ENCODE measurements at regions of chr13 and their contacts with region 1.

Region 1: DNA sequence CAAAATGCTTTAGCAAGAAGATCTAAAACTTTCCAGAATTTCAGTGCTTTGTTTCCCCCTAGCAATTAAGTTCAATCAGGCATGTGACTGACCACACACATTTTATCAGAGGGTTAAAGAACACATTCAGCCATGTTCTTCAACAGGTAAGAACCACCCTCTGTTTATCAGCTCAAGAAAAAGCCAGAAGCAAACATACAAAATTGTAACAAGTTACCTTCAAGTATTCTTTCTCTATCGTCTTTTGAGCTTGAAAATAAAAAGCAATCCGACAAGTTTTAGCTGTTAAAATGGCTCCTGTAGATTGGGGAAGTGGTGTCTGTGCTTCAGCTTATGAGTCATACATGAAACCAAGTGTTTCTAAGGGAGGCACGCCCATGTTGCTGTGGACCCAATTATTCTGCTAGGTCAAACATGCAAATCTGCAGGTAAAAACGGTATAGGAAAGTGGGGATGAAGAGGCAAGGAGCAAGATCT is at the start of gene ELF1:
- DNase-seq: peak; percentile 80
- H3K4me3 Mint-ChIP-seq: peak within 1 kb of the TSS; percentile 98
- H3K27ac Mint-ChIP-seq: peak within 1 kb of the TSS; percentile 97
- H3K4me1 Mint-ChIP-seq: peaks cover 45% of the 10 kb centered on the region
- H3K27me3 Mint-ChIP-seq: no peaks in the 10 kb centered on the region
- total RNA-seq, gene ELF1: 125 to 149 TPM

Region 2: DNA sequence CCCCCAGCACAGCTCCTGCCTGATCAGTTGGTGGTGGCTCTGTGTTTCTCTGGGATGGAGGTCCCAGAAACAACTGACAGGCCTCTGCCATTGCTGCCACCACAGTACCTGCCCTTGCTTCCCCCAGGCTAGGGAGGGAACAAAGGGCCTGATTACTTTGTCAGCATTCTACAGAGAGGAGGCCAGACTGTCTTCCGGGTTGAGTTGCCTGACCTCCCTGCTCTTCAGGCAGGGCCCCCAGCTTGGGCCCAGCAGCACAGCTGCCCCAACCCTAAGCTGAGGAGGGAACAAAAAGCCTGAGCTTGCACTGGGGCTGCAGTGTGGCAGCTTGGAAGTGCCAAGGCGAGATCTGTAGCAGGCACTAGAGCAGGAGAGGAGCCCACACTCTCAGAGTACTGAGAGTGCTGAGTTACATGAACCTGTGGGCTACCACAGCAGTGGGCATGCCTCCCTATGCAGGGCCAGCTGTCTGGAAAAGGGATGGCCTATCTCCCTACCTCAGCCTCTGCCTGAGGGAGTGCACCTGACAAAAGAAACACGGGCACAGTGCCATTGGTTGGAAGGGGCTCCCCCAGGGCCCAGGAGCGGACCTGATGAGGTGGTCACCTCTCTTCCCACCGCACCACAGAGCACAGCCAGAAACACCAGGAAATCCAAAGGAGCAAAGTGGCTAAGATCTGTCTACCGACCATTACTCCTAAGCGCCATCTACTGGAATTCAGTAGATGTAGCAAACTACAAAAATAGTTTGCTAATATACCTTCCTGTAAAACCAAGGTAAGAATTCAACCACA is 205.2 kb before region 1 on chr13:
- CTCF ChIA-PET with region 1: no interaction called
- POLR2A ChIA-PET with region 1: no interaction called
- DNase-seq: no peak
- H3K4me3 Mint-ChIP-seq: no peak overlapping the region
- H3K27ac Mint-ChIP-seq: peak overlapping the region; percentile 57
- H3K4me1 Mint-ChIP-seq: peaks cover 1% of the 10 kb centered on the region
- H3K27me3 Mint-ChIP-seq: no peaks in the 10 kb centered on the region

Region 3: GRCh38 chr13:40969169-40969901 is 49.7 kb before region 1 on chr13:
- CTCF ChIA-PET with region 1: no interaction called
- POLR2A ChIA-PET with region 1: no interaction called
- DNase-seq: peak; percentile 33
- H3K4me3 Mint-ChIP-seq: no peak overlapping the region
- H3K27ac Mint-ChIP-seq: no peak overlapping the region
- H3K4me1 Mint-ChIP-seq: peaks cover 83% of the 10 kb centered on the region
- H3K27me3 Mint-ChIP-seq: no peaks in the 10 kb centered on the region

Region 4: GRCh38 chr13:40982772-40983171 is 36.3 kb before region 1 on chr13:
- CTCF ChIA-PET with region 1: interaction called, 10 read pairs
- POLR2A ChIA-PET with region 1: interaction called, 15 read pairs
- DNase-seq: peak; percentile 80
- H3K4me3 Mint-ChIP-seq: peak overlapping the region; percentile 96
- H3K27ac Mint-ChIP-seq: peak overlapping the region; percentile 89
- H3K4me1 Mint-ChIP-seq: peaks cover 58% of the 10 kb centered on the region
- H3K27me3 Mint-ChIP-seq: no peaks in the 10 kb centered on the region

Region 5: GRCh38 chr13:41004875-41005693 is 14.0 kb before region 1 on chr13:
- CTCF ChIA-PET with region 1: interaction called, 9 read pairs
- POLR2A ChIA-PET with region 1: interaction called, 10 read pairs
- DNase-seq: peak; percentile 54
- H3K4me3 Mint-ChIP-seq: peak overlapping the region; percentile 74
- H3K27ac Mint-ChIP-seq: peak overlapping the region; percentile 93
- H3K4me1 Mint-ChIP-seq: peaks cover 68% of the 10 kb centered on the region
- H3K27me3 Mint-ChIP-seq: no peaks in the 10 kb centered on the region

Region 6: GRCh38 chr13:41034881-41035280 is 15.8 kb after region 1 on chr13:
- CTCF ChIA-PET with region 1: no interaction called
- POLR2A ChIA-PET with region 1: no interaction called
- DNase-seq: no peak
- H3K4me3 Mint-ChIP-seq: no peak overlapping the region
- H3K27ac Mint-ChIP-seq: no peak overlapping the region
- H3K4me1 Mint-ChIP-seq: peaks cover 12% of the 10 kb centered on the region
- H3K27me3 Mint-ChIP-seq: no peaks in the 10 kb centered on the region

Measured in activated CD4-positive, alpha-beta T cell treated with anti-CD3 and anti-CD28 coated beads, Interleukin-2, amount 10 ng/mL, durations not matched to agents 7 days and 5 days (primary cell).